IMR-90 (cell line): ENCODE measurements at regions of chr18 and their contacts with region 1.

Region 1: GRCh38 chr18:21904856-21905255 is 164.3 kb downstream of the MIB1 start:
- DNase-seq: no peak
- ATAC-seq: no peak
- H3K4me3 ChIP-seq: no peak overlapping the region
- H3K27ac ChIP-seq: no peak overlapping the region
- H3K4me1 ChIP-seq: no peaks in the 10 kb centered on the region; the same call in 1 of the 2 replicates
- H3K27me3 ChIP-seq: peaks cover 18% of the 10 kb centered on the region
- CTCF ChIP-seq: no peak
- POLR2A ChIP-seq: no peak
- RAD21 ChIP-seq: no peak

Region 2: GRCh38 chr18:21663578-21663977 is 241.3 kb before region 1 on chr18:
- CTCF ChIA-PET with region 1: no interaction called
- POLR2A ChIA-PET with region 1: no interaction called
- dilution Hi-C with region 1: no loop called
- in situ Hi-C with region 1: no loop called
- intact Hi-C with region 1: no loop called
- DNase-seq: no peak
- ATAC-seq: no peak
- H3K4me3 ChIP-seq: no peak overlapping the region
- H3K27ac ChIP-seq: no peak overlapping the region
- H3K4me1 ChIP-seq: no peaks in the 10 kb centered on the region
- H3K27me3 ChIP-seq: no peaks in the 10 kb centered on the region
- CTCF ChIP-seq: no peak
- POLR2A ChIP-seq: no peak
- RAD21 ChIP-seq: no peak

Region 3: DNA sequence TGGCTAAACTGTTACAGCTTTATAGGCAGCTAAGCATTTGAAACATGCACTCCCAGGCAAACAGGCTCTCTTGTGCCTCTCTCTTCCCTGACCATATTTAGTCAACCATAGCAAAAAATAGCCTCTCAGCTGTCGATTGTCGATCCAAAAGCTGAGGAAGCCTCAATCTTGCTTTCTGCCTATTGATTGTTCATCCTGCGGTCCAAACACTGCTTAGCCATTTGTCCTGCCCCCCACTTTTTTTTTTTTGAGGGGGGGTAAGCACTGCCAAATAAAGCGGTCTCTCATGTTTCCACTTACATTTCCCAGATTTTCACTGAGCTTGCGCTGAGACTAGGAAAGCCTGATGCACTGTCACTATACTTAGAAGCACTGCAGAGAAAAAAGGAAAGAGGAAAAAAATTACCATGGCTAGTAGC is 73.4 kb before region 1 on chr18:
- CTCF ChIA-PET with region 1: interaction called, 3 read pairs
- POLR2A ChIA-PET with region 1: interaction called, 22 read pairs
- dilution Hi-C with region 1: no loop called
- in situ Hi-C with region 1: no loop called
- intact Hi-C with region 1: no loop called
- DNase-seq: peak; percentile 34
- ATAC-seq: peak; percentile 48
- H3K4me3 ChIP-seq: no peak overlapping the region
- H3K27ac ChIP-seq: no peak overlapping the region
- H3K4me1 ChIP-seq: peaks cover 2% of the 10 kb centered on the region; the same call in 1 of the 2 replicates
- H3K27me3 ChIP-seq: no peaks in the 10 kb centered on the region
- CTCF ChIP-seq: no peak
- POLR2A ChIP-seq: no peak
- RAD21 ChIP-seq: no peak